ENCODE measurements at regions of chr14 and their contacts with region 1.

Region 1: DNA sequence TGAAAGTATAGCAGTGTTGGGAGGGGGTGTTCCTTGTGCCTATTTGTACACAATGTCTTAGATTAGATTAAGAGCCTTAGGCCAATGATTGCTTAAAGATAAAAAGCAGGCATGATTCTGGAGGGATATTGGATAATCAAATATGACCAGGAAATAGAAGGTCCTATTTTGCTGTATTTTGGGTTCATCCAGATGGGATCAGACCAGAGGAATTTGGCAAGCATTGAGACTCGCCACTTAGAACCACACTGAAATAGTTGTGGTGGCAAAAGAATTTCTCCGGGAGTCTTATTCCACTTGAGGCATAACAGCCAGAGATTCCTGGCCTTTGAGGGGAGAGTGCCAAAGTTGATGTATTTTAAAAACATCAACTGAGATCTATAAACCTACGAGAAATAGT is 327.2 kb downstream of the RAD51B start:
- DNase-seq: no peak
- ATAC-seq: no peak
- H3K4me3 ChIP-seq: no peak overlapping the region
- H3K27ac ChIP-seq: peak overlapping the region in 5 of 10 donors; percentile 3 to 86 (median 71)
- H3K4me1 ChIP-seq: peaks cover 7 to 35% (median 24%) of the 10 kb centered on the region in 9 donors
- H3K27me3 ChIP-seq: no peaks in the 10 kb centered on the region
- CTCF ChIP-seq: no peak

Region 2: GRCh38 chr14:68232300-68233055 is 85.7 kb after region 1 on chr14:
- intact Hi-C with region 1: loop called in 1 of 10 experiments (anchors 5 kb)
- DNase-seq: peak in 1 of 2 donors; percentile 86
- ATAC-seq: peak; percentile 84 to 99 (median 96)
- H3K4me3 ChIP-seq: no peak overlapping the region
- H3K27ac ChIP-seq: peak overlapping the region; percentile 26 to 81 (median 69)
- H3K4me1 ChIP-seq: peaks cover 5 to 38% (median 23%) of the 10 kb centered on the region in 9 donors
- H3K27me3 ChIP-seq: no peaks in the 10 kb centered on the region
- CTCF ChIP-seq: no peak

Measured in heart right ventricle (tissue), 16 donors.